PC-3 (cell line): ENCODE measurements at regions of chr4 and their contacts with region 1.

Region 1: DNA sequence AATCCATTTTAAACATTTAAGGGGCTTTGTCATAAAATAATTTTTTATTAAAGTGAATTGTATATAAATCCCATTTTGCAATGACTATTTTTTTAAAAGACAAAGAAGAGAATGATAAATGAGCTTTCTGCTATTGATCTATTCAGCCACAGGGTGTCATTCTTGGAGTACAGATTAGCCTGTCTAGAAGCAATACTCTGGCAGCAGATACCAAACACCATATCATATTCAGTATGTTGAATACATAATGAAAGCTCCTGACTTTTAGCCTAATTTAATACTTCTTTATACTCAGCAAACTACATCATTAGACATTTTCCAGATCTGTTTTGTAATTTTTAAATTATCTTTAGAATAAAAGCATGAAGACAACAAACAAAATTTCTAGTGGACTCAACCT is 496.3 kb downstream of the PDGFC start:
- DNase-seq: peak; percentile 69
- ATAC-seq: peak; percentile 60
- H3K4me3 ChIP-seq: no peak overlapping the region
- H3K27ac ChIP-seq: peak overlapping the region; percentile 69
- H3K4me1 ChIP-seq: peaks cover 18% of the 10 kb centered on the region
- H3K27me3 ChIP-seq: no peaks in the 10 kb centered on the region
- CTCF ChIP-seq: peak; percentile 77

Region 2: GRCh38 chr4:156294577-156294976 is 180.7 kb before region 1 on chr4:
- CTCF ChIA-PET with region 1: no interaction called
- POLR2A ChIA-PET with region 1: no interaction called
- intact Hi-C with region 1: loop called (anchors 10 kb)
- DNase-seq: peak; percentile 70
- ATAC-seq: peak; percentile 50; the same call in 1 of the 2 replicates
- H3K4me3 ChIP-seq: no peak overlapping the region
- H3K27ac ChIP-seq: peak overlapping the region; percentile 26; the same call in 1 of the 2 replicates
- H3K4me1 ChIP-seq: peaks cover 29% of the 10 kb centered on the region
- H3K27me3 ChIP-seq: no peaks in the 10 kb centered on the region
- CTCF ChIP-seq: peak; percentile 55

Region 3: GRCh38 chr4:156378033-156378665 is 97.2 kb before region 1 on chr4:
- CTCF ChIA-PET with region 1: no interaction called
- POLR2A ChIA-PET with region 1: no interaction called
- intact Hi-C with region 1: no loop called
- DNase-seq: peak; percentile 63
- ATAC-seq: 0 out of 2 replicates have a peak, but pooled peaks have one; percentile 29
- H3K4me3 ChIP-seq: no peak overlapping the region
- H3K27ac ChIP-seq: no peak overlapping the region
- H3K4me1 ChIP-seq: peaks cover 27% of the 10 kb centered on the region
- H3K27me3 ChIP-seq: no peaks in the 10 kb centered on the region
- CTCF ChIP-seq: peak; percentile 72

Region 4: GRCh38 chr4:156413239-156414135 is 61.8 kb before region 1 on chr4:
- CTCF ChIA-PET with region 1: no interaction called
- POLR2A ChIA-PET with region 1: no interaction called
- intact Hi-C with region 1: no loop called
- DNase-seq: no peak
- ATAC-seq: no peak
- H3K4me3 ChIP-seq: no peak overlapping the region
- H3K27ac ChIP-seq: no peak overlapping the region
- H3K4me1 ChIP-seq: peaks cover 4% of the 10 kb centered on the region; the same call in 1 of the 2 replicates
- H3K27me3 ChIP-seq: no peaks in the 10 kb centered on the region
- CTCF ChIP-seq: no peak

Region 5: DNA sequence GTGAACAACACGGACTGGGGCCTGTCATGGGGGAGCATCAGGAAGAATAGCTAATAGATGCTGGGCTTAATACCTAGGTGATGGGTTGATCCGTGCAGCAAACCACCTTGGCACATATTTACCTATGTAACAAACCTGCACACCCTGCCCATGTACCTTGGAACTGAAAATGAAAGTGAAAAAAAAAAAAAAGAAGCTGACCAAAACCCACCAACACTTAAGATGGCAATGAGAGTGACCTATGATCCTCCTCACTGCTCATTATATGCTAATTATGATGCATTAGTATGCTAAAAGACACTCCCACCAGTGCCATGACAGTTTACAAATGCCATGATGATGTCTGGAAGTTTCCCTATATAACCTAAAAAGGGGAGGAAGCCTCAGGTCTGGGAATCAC is 18.5 kb before region 1 on chr4:
- CTCF ChIA-PET with region 1: no interaction called
- POLR2A ChIA-PET with region 1: no interaction called
- intact Hi-C with region 1: no loop called
- DNase-seq: no peak
- ATAC-seq: no peak
- H3K4me3 ChIP-seq: no peak overlapping the region
- H3K27ac ChIP-seq: no peak overlapping the region
- H3K4me1 ChIP-seq: no peaks in the 10 kb centered on the region
- H3K27me3 ChIP-seq: no peaks in the 10 kb centered on the region
- CTCF ChIP-seq: no peak

Region 6: DNA sequence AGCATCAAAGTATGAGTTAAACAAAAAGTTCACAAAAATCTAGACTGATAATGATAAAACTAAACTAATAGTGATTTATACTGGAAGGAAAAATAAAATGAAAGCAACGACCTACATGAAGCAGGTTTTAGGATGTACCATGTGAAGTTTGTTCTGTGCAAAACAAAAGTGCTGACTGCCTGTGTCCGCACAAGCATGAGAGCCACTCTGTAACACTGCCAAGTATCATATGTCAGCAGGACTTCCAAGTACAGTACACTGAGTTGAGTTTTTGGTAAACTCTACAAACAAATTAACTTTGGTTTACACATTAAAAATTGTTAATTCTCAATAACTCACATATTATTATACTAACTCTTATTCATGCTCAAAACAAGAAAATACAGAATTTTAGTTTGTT is 37.3 kb after region 1 on chr4:
- CTCF ChIA-PET with region 1: no interaction called
- POLR2A ChIA-PET with region 1: no interaction called
- intact Hi-C with region 1: no loop called
- DNase-seq: no peak
- ATAC-seq: no peak
- H3K4me3 ChIP-seq: no peak overlapping the region
- H3K27ac ChIP-seq: no peak overlapping the region
- H3K4me1 ChIP-seq: no peaks in the 10 kb centered on the region
- H3K27me3 ChIP-seq: no peaks in the 10 kb centered on the region
- CTCF ChIP-seq: no peak

Region 7: GRCh38 chr4:156528216-156528615 is 52.9 kb after region 1 on chr4:
- CTCF ChIA-PET with region 1: no interaction called
- POLR2A ChIA-PET with region 1: no interaction called
- intact Hi-C with region 1: loop called (anchors 1 kb)
- DNase-seq: no peak
- ATAC-seq: no peak
- H3K4me3 ChIP-seq: no peak overlapping the region
- H3K27ac ChIP-seq: peak overlapping the region; percentile 62
- H3K4me1 ChIP-seq: peaks cover 13% of the 10 kb centered on the region
- H3K27me3 ChIP-seq: no peaks in the 10 kb centered on the region
- CTCF ChIP-seq: no peak

Region 8: DNA sequence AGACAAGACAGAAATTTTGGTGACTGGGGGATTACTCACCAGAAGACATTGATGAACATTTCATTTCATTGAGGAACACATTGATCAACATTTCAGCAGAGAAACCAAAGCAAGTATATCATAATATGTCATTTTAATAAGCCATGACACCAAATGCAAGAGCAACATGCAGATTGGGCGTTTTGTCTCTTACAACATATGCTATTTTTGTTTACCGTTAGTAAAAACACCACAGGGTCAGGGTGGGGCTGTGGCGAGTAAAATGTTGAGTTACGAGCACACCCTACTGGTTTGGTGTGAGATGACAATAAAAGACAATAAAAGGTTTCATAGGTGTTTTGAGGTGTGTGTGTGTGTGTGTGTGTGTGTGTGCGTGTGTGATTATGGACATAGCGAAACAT is 201.8 kb after region 1 on chr4:
- CTCF ChIA-PET with region 1: interaction called, 22 read pairs
- POLR2A ChIA-PET with region 1: no interaction called
- intact Hi-C with region 1: loop called (anchors 1 kb)
- DNase-seq: peak; percentile 71
- ATAC-seq: peak; percentile 77
- H3K4me3 ChIP-seq: peak overlapping the region; percentile 39; the same call in 1 of the 2 replicates
- H3K27ac ChIP-seq: peak overlapping the region; percentile 58
- H3K4me1 ChIP-seq: peaks cover 38% of the 10 kb centered on the region
- H3K27me3 ChIP-seq: no peaks in the 10 kb centered on the region
- CTCF ChIP-seq: peak; percentile 70

Region 9: GRCh38 chr4:156968479-156968984 is 493.2 kb after region 1 on chr4:
- CTCF ChIA-PET with region 1: interaction called, 3 read pairs
- POLR2A ChIA-PET with region 1: no interaction called
- intact Hi-C with region 1: loop called (anchors 1 kb)
- DNase-seq: peak; percentile 81
- ATAC-seq: peak; percentile 13; the same call in 1 of the 2 replicates
- H3K4me3 ChIP-seq: peak overlapping the region; percentile 94
- H3K27ac ChIP-seq: no peak overlapping the region
- H3K4me1 ChIP-seq: peaks cover 25% of the 10 kb centered on the region
- H3K27me3 ChIP-seq: no peaks in the 10 kb centered on the region
- CTCF ChIP-seq: peak; percentile 78

Region 10: DNA sequence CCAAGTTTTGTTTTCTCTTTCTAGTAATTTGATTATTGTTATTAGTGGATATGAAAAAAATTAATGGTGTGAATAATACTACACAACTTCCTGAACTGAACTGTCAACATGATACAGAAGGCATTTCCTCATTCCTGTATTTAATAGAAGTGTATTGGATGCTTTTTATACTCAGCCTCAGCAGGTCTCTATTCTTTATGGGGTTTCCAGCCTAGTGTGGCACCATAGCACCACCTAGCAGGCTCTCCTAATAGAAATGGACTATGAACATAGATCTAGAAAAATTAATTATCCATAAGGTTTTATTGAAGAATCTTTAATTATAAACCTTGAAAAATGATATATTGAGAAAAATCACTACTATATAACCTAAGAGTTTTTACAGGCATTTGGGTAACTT is 653.1 kb after region 1 on chr4:
- CTCF ChIA-PET with region 1: no interaction called
- POLR2A ChIA-PET with region 1: no interaction called
- intact Hi-C with region 1: loop called (anchors 1 kb)
- DNase-seq: peak; percentile 50
- ATAC-seq: peak; percentile 70
- H3K4me3 ChIP-seq: no peak overlapping the region
- H3K27ac ChIP-seq: no peak overlapping the region
- H3K4me1 ChIP-seq: no peaks in the 10 kb centered on the region
- H3K27me3 ChIP-seq: no peaks in the 10 kb centered on the region
- CTCF ChIP-seq: peak; percentile 67